HCT116 (cell line): ENCODE measurements at regions of chr4 and their contacts with region 1.

Region 1: GRCh38 chr4:123564758-123565346 is 168.3 kb downstream of the SPRY1 start:
- DNase-seq: peak; percentile 75
- ATAC-seq: peak; percentile 100
- H3K4me3 ChIP-seq: no peak overlapping the region
- H3K27ac ChIP-seq: no peak overlapping the region
- H3K4me1 ChIP-seq: peaks cover 0 to 4% of the 10 kb centered on the region in 2 experiments; a peak in 2 of 4 replicates
- H3K27me3 ChIP-seq: no peaks in the 10 kb centered on the region
- CTCF ChIP-seq: peak; percentile 99
- POLR2A ChIP-seq: no peak
- RAD21 ChIP-seq: peak; percentile 74

Region 2: GRCh38 chr4:123396307-123397143 is 168.3 kb before region 1 on chr4 and contains the start of gene SPRY1:
- CTCF ChIA-PET with region 1: interaction called, 6 read pairs
- POLR2A ChIA-PET with region 1: no interaction called
- RAD21 ChIA-PET with region 1: no interaction called
- intact Hi-C with region 1: loop called (anchors 2 kb)
- DNase-seq: peak; percentile 89
- ATAC-seq: peak; percentile 74
- H3K4me3 ChIP-seq: peak within 1 kb of the TSS; percentile 60 to 74
- H3K27ac ChIP-seq: peak within 1 kb of the TSS; percentile 50
- H3K4me1 ChIP-seq: peaks cover 3 to 30% of the 10 kb centered on the region in 2 experiments; a peak in 3 of 4 replicates
- H3K27me3 ChIP-seq: no peaks in the 10 kb centered on the region
- CTCF ChIP-seq: no peak
- POLR2A ChIP-seq: peak; percentile 75
- RAD21 ChIP-seq: no peak; the same call in 1 of the 2 replicates
- total RNA-seq, gene SPRY1: 4.8 TPM

Region 3: DNA sequence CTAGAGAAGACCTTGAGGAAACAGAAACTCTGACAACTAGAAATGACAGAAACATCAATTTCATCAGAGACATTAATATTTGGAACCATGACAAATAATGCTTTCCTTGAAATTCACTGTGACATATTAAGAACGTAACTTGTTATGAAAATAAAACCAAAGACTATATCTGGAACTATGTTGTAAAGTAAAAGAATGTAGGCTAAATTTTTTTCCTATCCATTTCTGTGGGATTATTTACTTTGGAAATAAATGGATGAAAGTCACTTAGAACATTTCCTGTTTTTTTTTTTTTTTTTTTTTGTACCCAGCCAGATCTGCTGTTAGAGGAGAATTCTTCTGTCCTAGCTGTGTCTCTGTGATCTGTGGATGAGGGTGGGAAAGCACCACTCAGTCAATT is 87.6 kb after region 1 on chr4:
- CTCF ChIA-PET with region 1: no interaction called
- POLR2A ChIA-PET with region 1: no interaction called
- RAD21 ChIA-PET with region 1: no interaction called
- intact Hi-C with region 1: loop called (anchors 2 kb)
- DNase-seq: no peak
- ATAC-seq: no peak
- H3K4me3 ChIP-seq: no peak overlapping the region
- H3K27ac ChIP-seq: no peak overlapping the region
- H3K4me1 ChIP-seq: no peaks in the 10 kb centered on the region
- H3K27me3 ChIP-seq: no peaks in the 10 kb centered on the region
- CTCF ChIP-seq: no peak
- POLR2A ChIP-seq: no peak
- RAD21 ChIP-seq: no peak

Region 4: GRCh38 chr4:124121461-124121934 is 556.6 kb after region 1 on chr4:
- CTCF ChIA-PET with region 1: no interaction called
- POLR2A ChIA-PET with region 1: no interaction called
- RAD21 ChIA-PET with region 1: no interaction called
- intact Hi-C with region 1: loop called (anchors 5 kb)
- DNase-seq: no peak
- ATAC-seq: no peak
- H3K4me3 ChIP-seq: no peak overlapping the region
- H3K27ac ChIP-seq: no peak overlapping the region
- H3K4me1 ChIP-seq: no peaks in the 10 kb centered on the region
- H3K27me3 ChIP-seq: no peaks in the 10 kb centered on the region
- CTCF ChIP-seq: no peak
- POLR2A ChIP-seq: no peak
- RAD21 ChIP-seq: no peak